Activated CD8-positive, alpha-beta memory T cell treated with anti-CD3 and anti-CD28 coated beads, Interleukin-2, amount 10 ng/mL, durations not matched to agents 7 days and 5 days (primary cell): ENCODE measurements at regions of chr1 and their contacts with region 1.

Region 1: DNA sequence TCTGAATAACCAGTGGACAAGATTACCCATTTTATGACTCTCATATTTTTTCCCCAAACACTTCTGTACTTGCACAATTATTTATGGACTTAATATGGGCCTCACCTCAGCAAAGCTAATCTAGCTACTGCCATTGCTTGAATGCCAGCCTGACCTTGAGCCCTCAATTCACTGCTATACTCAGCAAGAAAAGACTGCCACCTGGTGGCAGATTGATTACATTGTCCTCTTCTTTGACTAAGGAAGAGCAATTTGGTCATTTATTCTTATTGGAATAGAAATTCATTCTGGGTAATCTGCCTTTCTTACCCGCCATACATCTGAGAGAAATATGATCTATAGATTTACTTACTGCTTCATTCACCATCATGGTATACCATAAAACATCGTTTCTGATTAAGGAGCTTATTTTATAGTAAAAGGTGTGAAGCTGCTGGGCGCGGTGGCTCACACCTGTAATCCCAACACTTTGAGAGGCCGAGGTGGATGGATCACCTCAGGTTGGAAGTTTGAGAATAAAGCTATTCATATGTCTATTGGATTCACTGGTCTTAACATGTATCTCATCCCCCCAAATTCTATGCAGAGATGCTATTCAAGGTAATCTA is 32.9 kb upstream of the DIPK1A start:
- DNase-seq: peak; percentile 85
- ATAC-seq: peak; percentile 87
- H3K4me3 Mint-ChIP-seq: no peak overlapping the region
- H3K27ac Mint-ChIP-seq: peak overlapping the region; percentile 11
- H3K4me1 Mint-ChIP-seq: peaks cover 54% of the 10 kb centered on the region
- H3K27me3 Mint-ChIP-seq: no peaks in the 10 kb centered on the region

Region 2: DNA sequence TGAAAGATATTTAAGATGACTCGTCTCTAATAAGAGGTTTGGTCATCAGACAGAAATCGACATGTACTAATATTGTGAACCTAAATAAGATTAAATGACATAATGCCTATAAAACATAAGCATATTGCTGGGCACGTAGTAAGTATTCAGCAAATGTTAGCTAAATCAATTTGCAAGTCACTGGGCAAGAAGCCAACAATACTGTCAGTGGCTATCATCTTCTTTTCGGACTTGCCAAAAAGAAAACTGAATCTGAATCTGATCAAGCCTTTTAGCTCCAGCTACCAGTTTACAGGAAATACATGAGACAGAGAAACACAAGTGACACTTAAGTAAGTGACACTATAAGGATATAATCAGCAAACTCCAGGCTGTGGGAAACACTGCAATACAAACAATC is 116.4 kb before region 1 on chr1:
- CTCF ChIA-PET with region 1: interaction called, 16 read pairs
- DNase-seq: no peak
- ATAC-seq: peak; percentile 63
- H3K4me3 Mint-ChIP-seq: peak overlapping the region; percentile 56
- H3K27ac Mint-ChIP-seq: peak overlapping the region; percentile 68
- H3K4me1 Mint-ChIP-seq: peaks cover 27% of the 10 kb centered on the region
- H3K27me3 Mint-ChIP-seq: no peaks in the 10 kb centered on the region

Region 3: DNA sequence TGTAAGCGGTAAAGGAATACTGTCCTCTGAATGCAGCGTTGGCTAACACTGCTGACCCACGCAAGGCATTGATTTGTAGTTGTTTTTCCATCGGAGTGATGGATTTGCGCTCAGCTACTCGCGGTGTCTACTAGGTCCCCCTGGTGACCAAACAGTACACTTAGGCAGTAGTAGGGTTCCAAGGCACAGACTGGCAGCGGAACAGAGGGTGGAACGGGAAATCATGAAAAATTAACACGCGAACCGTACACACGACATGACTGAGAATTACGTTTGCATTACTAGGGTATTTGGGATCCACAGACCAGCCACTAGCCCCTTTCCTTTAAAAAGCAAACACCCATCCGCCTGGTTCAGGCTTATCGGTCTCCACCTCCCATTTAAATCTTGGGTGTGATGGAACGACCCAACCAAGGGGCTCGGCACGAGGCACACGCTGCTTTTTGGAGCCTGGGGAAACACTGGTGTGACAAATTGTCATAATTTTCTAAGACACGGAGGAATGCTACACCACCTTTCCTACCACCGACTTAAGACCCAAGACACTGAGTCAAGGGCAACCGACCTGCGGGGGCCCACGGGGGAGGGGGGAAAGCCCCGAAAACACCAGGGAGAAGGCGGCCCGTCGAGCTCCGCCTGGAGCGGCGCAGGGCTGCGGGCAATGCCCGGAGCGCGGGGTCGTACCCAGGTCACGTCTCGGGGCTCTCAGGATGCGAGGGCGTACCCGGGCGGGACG is 33.6 kb before region 1 on chr1:
- CTCF ChIA-PET with region 1: interaction called, 483 read pairs
- DNase-seq: peak; percentile 81
- ATAC-seq: peak; percentile 50
- H3K4me3 Mint-ChIP-seq: no peak overlapping the region
- H3K27ac Mint-ChIP-seq: peak overlapping the region; percentile 96
- H3K4me1 Mint-ChIP-seq: peaks cover 38% of the 10 kb centered on the region
- H3K27me3 Mint-ChIP-seq: no peaks in the 10 kb centered on the region

Region 4: DNA sequence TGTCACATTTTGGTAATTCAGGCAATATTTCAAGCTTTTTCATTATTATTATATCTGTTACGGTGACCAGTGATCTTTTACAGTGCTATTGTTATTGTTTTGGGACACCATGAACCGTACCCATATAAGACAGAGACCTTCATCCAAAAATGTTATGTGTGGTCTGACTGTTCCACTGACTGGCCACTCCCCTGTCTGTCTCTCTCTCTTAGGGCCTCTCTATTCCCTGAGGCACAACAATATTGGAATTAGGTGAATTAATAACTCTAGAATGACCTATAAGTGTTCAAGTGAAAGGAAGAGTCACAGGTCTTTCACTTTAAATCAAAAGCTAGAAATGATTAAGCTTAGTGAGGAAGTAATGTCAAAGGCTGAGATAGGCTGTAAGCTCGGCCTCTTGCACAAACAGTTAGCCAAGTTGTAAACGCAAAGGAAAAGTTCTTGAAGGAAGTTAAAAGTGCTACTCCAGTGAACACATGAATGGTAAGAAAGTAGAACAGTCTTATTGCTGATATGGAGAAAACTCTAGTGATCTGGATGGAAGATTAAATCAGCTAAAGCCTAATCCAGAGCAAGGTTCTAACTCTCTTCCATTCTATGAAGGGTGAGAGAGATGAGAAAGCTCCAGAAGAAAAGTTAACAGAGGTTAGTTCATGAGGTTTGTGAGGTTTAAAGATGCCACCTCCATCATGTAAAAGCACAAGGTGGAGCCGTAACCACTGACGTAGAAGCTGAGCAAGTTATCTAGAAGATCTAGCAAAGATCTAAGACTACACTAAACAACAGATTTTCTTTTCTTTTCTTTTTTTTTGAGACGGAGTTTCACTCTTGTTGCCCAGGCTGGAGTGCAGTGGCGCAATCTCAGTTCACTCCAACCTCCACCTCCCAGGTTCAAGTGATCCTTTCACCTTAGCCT is 13.2 kb before region 1 on chr1:
- CTCF ChIA-PET with region 1: interaction called, 483 read pairs
- DNase-seq: peak; percentile 71
- ATAC-seq: peak; percentile 78
- H3K4me3 Mint-ChIP-seq: peak overlapping the region; percentile 62
- H3K27ac Mint-ChIP-seq: peak overlapping the region; percentile 98
- H3K4me1 Mint-ChIP-seq: peaks cover 51% of the 10 kb centered on the region
- H3K27me3 Mint-ChIP-seq: no peaks in the 10 kb centered on the region

Region 5: GRCh38 chr1:93061895-93062792 is 67.9 kb after region 1 on chr1:
- CTCF ChIA-PET with region 1: interaction called, 14 read pairs
- DNase-seq: peak; percentile 69
- ATAC-seq: peak; percentile 77
- H3K4me3 Mint-ChIP-seq: no peak overlapping the region
- H3K27ac Mint-ChIP-seq: no peak overlapping the region
- H3K4me1 Mint-ChIP-seq: peaks cover 2% of the 10 kb centered on the region
- H3K27me3 Mint-ChIP-seq: peaks cover 50% of the 10 kb centered on the region